ENCODE measurements at regions of chr1 and their contacts with region 1.

Region 1: GRCh38 chr1:24391882-24392603 is 21.5 kb downstream of the STPG1 start:
- DNase-seq: no peak
- H3K4me3 ChIP-seq: no peak overlapping the region
- CTCF ChIP-seq: peak; percentile 82

Region 2: GRCh38 chr1:24308365-24309015 is 83.6 kb before region 1 on chr1:
- in situ Hi-C with region 1: loop called (anchors 5 kb)
- DNase-seq: no peak
- H3K4me3 ChIP-seq: no peak overlapping the region
- CTCF ChIP-seq: peak; percentile 52

Region 3: GRCh38 chr1:24463776-24464735 is 72.0 kb after region 1 on chr1:
- in situ Hi-C with region 1: no loop called
- DNase-seq: no peak
- H3K4me3 ChIP-seq: no peak overlapping the region
- CTCF ChIP-seq: no peak

Region 4: DNA sequence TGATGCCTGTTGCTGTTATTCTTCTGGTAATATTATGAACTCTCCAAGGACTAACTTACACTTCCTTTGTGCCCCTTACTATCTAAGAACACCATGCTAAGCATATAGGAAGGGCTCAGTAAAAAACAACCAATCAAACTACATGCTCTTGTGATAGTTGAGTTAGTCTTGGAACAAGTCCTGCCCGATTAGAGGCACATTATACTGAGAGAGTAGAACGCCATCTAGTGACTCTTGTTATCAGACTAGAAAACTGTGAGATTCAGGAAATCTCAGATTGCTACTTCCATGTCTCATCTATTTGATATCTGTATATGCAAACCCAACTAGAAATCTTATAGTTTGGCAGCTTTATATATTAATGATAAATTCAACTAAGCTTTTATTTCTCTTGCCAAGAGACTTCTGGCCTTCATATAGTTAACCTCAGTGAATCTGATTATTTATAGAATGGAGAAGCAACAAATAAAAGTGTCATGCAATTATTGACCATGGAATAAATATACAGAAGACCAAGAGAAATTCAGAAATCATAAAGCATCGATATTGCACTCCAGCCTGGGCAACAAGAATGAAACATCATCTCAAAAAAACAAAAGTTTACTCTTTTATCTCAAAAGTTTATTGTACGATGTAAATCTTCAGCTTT is 243.3 kb after region 1 on chr1:
- in situ Hi-C with region 1: loop called (anchors 5 kb)
- DNase-seq: peak; percentile 67
- H3K4me3 ChIP-seq: no peak overlapping the region
- CTCF ChIP-seq: peak; percentile 59